ENCODE measurements at regions of chr11 and their contacts with region 1.

Region 1: DNA sequence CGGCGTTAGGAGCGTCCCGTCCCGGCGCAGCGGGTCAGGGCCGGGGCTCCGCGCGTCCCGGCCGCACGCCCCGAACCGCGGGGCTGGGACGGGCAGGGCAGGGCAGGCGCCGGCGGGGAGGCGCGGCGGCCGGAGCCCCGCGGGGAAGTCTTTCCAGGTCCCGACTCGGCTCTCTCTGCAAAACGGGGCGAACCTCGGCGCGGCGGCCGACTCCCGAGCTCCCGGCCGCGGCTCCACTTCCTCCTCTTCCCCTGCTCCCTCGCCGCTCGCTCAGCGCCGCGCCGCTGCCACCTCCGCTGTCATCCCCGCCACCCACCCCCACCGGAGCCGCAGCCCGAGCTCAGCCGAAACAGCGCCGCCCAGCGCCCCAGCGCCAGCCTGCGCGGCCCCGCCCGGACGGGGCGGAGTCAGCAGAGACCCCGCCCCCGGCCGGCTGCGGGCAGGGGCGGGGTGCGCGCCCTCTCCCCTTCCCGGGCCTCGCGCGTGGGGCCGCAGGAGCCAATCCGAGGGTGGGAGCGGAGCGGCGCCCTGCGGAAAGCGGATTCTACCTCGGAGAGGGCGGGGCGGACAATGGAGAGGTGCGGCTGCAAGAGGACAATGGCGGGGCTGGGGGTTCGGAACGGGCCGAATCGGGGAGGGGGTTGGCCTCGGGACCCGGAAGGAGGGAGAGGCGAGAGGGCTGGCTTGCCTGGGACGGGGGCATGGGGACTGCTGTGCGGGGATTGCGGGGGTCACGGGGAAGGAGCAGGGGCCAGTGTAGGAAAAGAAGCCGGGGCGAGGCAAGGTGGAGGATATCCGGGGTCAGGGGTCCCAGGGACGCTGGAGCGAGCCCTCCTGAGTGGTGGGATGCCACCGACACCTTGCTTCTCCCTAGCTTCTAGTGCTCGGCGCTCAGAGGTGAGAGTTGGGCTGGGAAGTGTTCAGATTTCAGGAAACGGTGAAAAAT is at the start of gene GDPD5:
- DNase-seq: peak; percentile 55 to 90
- H3K4me3 ChIP-seq: peak within 1 kb of the TSS; percentile 83 to 97
- H3K27ac ChIP-seq: peak within 1 kb of the TSS in 1 of 2 donors; percentile 51
- H3K4me1 ChIP-seq: peaks cover 5 to 20% of the 10 kb centered on the region in 2 donors
- H3K27me3 ChIP-seq: no peaks in the 10 kb centered on the region
- CTCF ChIP-seq: peak; percentile 9 to 45 (median 44)
- total RNA-seq, gene GDPD5: 64.6 TPM

Region 2: GRCh38 chr11:75280227-75280701 is 245.6 kb before region 1 on chr11:
- intact Hi-C with region 1: loop called (anchors 10 kb)
- DNase-seq: peak; percentile 9 to 85
- H3K4me3 ChIP-seq: no peak overlapping the region
- H3K27ac ChIP-seq: no peak overlapping the region
- H3K4me1 ChIP-seq: no peaks in the 10 kb centered on the region
- H3K27me3 ChIP-seq: no peaks in the 10 kb centered on the region
- CTCF ChIP-seq: peak; percentile 93 to 96 (median 94)

Region 3: GRCh38 chr11:75399344-75400145 is 126.3 kb before region 1 on chr11 and contains the start of gene RPS3:
- intact Hi-C with region 1: loop called (anchors 2 kb)
- DNase-seq: peak; percentile 70 to 95
- H3K4me3 ChIP-seq: peak within 1 kb of the TSS; percentile 70 to 78
- H3K27ac ChIP-seq: peak within 1 kb of the TSS; percentile 91 to 98
- H3K4me1 ChIP-seq: peaks cover 0 to 6% of the 10 kb centered on the region in 2 donors
- H3K27me3 ChIP-seq: no peaks in the 10 kb centered on the region
- CTCF ChIP-seq: no peak
- total RNA-seq, gene RPS3: 511 TPM

Measured in ascending aorta (tissue), 2 donors.